ENCODE measurements at regions of chr6 and their contacts with region 1.

Region 1: DNA sequence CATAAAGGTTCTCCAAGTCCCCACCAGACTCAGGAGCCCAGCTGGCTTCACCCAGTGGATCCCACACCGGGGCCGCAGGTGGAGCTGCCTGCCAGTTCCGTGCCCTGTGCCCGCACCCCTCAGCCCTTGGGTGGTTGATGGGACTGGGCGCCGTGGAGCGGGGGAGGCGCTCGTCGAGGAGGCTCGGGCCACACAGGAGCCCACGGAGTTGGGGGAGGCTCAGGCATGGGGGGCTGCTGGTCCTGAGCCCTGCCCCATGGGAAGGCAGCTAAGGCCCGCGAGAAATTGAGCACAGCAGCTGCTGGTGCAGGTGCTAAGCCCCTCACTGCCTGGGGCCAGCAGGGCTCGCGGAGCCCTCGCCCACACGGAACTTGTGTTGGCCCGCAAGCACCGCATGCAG is 234.4 kb upstream of the HSF2 start:
- DNase-seq: no peak
- ATAC-seq: no peak
- H3K4me3 ChIP-seq: no peak overlapping the region
- H3K4me3 Mint-ChIP-seq: no peak overlapping the region
- H3K27ac ChIP-seq: no peak overlapping the region
- H3K27ac Mint-ChIP-seq: no peak overlapping the region
- H3K4me1 ChIP-seq: no peaks in the 10 kb centered on the region
- H3K4me1 Mint-ChIP-seq: no peaks in the 10 kb centered on the region
- H3K27me3 ChIP-seq: no peaks in the 10 kb centered on the region
- H3K27me3 Mint-ChIP-seq: no peaks in the 10 kb centered on the region

Region 2: DNA sequence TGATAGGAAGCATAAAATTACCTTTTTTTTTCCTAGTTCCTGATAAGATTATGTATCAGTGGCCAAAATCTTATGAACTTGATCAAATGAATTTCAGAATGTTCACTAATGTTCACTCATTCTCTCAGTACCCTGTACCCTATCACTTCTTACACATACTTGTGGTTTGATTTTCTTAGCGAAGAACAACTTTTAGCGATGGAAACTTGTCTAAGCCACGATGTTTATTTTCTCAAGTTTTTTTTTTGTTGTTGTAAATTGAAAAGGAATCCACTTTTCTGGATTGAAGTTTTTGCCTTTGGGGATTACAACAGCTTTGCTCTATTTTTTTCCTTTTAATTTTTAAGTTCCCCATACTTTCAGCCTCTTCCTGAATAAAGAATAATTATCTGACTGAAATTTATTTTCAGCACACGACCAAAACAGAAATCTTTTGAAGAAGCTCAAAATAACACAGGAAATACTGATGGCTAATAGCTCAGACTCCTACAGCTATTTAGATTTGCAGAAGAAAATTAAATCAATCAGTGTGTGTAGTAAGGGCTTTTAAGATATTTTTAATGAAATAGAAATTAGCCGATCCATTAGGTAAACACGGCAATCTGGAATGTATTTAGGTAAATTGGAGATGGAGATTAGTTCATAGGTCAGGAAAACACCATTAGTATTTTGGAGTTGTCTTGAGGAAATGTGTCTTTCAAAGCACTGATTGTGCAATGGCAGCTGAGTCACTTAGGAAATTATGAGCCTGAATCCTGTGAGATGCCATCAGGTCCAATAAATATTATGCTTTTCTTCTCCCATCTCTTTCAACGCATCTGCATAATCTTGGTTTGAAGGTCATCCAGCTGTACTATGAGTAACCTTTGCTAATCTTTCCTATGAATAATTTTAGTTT is 512.0 kb before region 1 on chr6:
- CTCF ChIA-PET with region 1: no interaction called
- POLR2A ChIA-PET with region 1: no interaction called
- DNase-seq: no peak
- ATAC-seq: no peak
- H3K4me3 ChIP-seq: no peak overlapping the region
- H3K4me3 Mint-ChIP-seq: peak overlapping the region in 1 of 3 donors; percentile 66
- H3K27ac ChIP-seq: no peak overlapping the region
- H3K27ac Mint-ChIP-seq: peak overlapping the region; percentile 87 to 90
- H3K4me1 ChIP-seq: peaks cover 0 to 20% of the 10 kb centered on the region in 2 experiments
- H3K4me1 Mint-ChIP-seq: peaks cover 36 to 42% (median 38%) of the 10 kb centered on the region in 3 donors
- H3K27me3 ChIP-seq: no peaks in the 10 kb centered on the region
- H3K27me3 Mint-ChIP-seq: no peaks in the 10 kb centered on the region

Region 3: GRCh38 chr6:122116119-122116834 is 48.7 kb before region 1 on chr6:
- CTCF ChIA-PET with region 1: no interaction called
- POLR2A ChIA-PET with region 1: interaction called in 1 of 2 experiments, 11 read pairs
- DNase-seq: no peak
- ATAC-seq: no peak
- H3K4me3 ChIP-seq: no peak overlapping the region
- H3K4me3 Mint-ChIP-seq: no peak overlapping the region
- H3K27ac ChIP-seq: no peak overlapping the region
- H3K27ac Mint-ChIP-seq: no peak overlapping the region
- H3K4me1 ChIP-seq: no peaks in the 10 kb centered on the region
- H3K4me1 Mint-ChIP-seq: no peaks in the 10 kb centered on the region
- H3K27me3 ChIP-seq: no peaks in the 10 kb centered on the region
- H3K27me3 Mint-ChIP-seq: peaks cover 0 to 1% of the 10 kb centered on the region in 2 donors

Region 4: GRCh38 chr6:122184401-122184827 is 19.4 kb after region 1 on chr6:
- CTCF ChIA-PET with region 1: interaction called in 1 of 2 experiments, 4 read pairs
- POLR2A ChIA-PET with region 1: interaction called in 1 of 2 experiments, 11 read pairs
- DNase-seq: no peak
- ATAC-seq: no peak
- H3K4me3 ChIP-seq: no peak overlapping the region
- H3K4me3 Mint-ChIP-seq: no peak overlapping the region
- H3K27ac ChIP-seq: no peak overlapping the region
- H3K27ac Mint-ChIP-seq: no peak overlapping the region
- H3K4me1 ChIP-seq: no peaks in the 10 kb centered on the region
- H3K4me1 Mint-ChIP-seq: no peaks in the 10 kb centered on the region
- H3K27me3 ChIP-seq: no peaks in the 10 kb centered on the region
- H3K27me3 Mint-ChIP-seq: peaks cover 0 to 3% of the 10 kb centered on the region in 2 donors

Measured in T-cell (primary cell).